Activated CD8-positive, alpha-beta T cell treated with anti-CD3 and anti-CD28 coated beads, Interleukin-2, amount 10 ng/mL, durations not matched to agents 7 days and 5 days (primary cell): ENCODE measurements at regions of chr15 and their contacts with region 1.

Region 1: DNA sequence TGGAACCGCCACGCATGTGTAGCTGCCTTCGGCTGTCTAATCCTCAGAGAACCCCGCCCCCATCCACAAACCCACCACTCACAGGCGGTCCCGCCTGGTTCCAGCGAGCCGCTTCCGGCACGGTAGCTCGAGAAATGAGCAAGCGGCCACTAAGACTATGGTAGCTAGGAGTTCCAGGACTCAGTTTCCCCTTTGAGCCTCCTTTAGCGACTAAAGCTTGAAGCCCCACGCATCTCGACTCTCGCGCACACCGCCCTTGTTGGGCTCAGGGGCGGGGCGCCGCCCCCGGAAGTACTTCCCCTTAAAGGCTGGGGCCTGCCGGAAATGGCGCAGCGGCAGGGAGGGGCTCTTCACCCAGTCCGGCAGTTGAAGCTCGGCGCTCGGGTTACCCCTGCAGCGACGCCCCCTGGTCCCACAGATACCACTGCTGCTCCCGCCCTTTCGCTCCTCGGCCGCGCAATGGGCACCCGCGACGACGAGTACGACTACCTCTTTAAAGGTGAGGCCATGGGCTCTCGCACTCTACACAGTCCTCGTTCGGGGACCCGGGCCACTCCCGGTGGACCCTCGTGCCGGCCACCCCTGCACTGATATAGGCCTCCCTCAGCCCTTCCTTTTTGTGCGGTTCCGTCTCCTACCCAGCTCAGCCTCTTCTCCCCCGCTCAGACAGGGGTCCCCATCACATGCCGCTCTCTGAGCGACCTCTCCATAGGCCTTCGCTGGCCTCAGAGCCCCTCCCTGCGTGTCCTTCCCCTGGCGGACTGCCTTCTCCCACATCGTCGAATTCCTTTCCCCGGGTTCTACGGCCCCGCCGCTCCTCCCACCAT is at the start of gene RAB11A:
- DNase-seq: peak; percentile 98
- ATAC-seq: peak; percentile 94
- H3K4me3 Mint-ChIP-seq: peak within 1 kb of the TSS; percentile 99
- H3K27ac Mint-ChIP-seq: peak within 1 kb of the TSS; percentile 94
- H3K4me1 Mint-ChIP-seq: peaks cover 28% of the 10 kb centered on the region
- H3K27me3 Mint-ChIP-seq: peaks cover 4% of the 10 kb centered on the region
- total RNA-seq, gene RAB11A: 163 to 168 TPM

Region 2: DNA sequence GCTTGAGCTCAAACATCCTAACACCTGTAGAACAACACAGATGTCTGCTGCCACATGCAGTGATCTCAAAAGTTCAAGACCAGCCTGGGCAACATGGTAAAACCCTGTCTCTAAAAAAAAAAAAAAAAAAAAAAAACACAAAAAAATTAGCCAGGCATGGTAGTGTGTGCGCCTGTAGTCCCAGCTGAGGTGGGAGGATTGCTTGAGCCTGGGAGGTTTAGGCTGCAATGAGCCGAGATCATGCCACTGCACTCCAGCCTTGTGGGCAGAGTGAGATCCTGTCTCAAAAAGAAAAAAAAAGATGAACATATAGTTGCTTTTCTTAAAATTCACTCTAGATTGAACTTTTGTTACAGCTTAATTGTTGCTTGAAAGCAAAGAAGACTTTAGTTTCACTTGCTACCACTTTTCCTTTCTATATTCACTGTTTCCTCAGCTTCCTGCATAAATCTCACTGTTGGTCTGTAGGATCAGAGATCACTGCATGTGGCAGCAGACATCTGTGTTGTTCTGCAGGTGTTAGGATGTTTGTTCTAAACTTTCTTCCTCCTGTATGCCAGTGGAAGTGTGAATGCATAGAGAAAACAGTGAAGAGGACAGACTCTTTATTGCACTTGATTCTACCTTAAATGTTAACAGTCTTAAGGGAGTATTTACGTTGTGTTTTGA is 12.6 kb after region 1 on chr15:
- CTCF ChIA-PET with region 1: interaction called, 9 read pairs
- POLR2A ChIA-PET with region 1: interaction called, 17 read pairs
- DNase-seq: no peak
- ATAC-seq: peak; percentile 66
- H3K4me3 Mint-ChIP-seq: peak overlapping the region; percentile 15
- H3K27ac Mint-ChIP-seq: peak overlapping the region; percentile 73
- H3K4me1 Mint-ChIP-seq: peaks cover 57% of the 10 kb centered on the region
- H3K27me3 Mint-ChIP-seq: no peaks in the 10 kb centered on the region

Region 3: GRCh38 chr15:65887565-65887964 is 18.2 kb after region 1 on chr15:
- CTCF ChIA-PET with region 1: interaction called, 9 read pairs
- POLR2A ChIA-PET with region 1: interaction called, 17 read pairs
- DNase-seq: peak; percentile 81
- ATAC-seq: peak; percentile 93
- H3K4me3 Mint-ChIP-seq: peak overlapping the region; percentile 19
- H3K27ac Mint-ChIP-seq: peak overlapping the region; percentile 71
- H3K4me1 Mint-ChIP-seq: peaks cover 73% of the 10 kb centered on the region
- H3K27me3 Mint-ChIP-seq: no peaks in the 10 kb centered on the region

Region 4: DNA sequence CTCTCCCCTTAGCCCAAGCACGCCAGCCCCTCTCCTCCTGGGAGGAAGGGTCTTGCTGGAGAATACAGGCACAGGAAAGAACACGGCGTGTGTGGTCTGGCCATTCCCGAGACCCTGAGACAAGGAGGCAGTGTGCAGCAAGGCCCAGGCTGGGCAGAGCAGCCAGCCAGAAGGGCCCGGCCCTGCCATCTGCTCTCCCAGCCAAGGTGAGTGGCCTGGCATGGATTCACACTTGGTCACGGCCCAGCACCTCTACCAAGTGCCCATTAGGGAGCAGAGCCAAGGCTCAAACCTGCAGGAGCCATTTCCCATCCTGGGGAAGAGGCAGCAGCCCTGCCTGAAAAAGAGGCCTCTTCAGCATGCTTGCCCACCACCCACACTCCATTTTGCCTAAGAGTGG is 355.6 kb after region 1 on chr15:
- CTCF ChIA-PET with region 1: no interaction called
- POLR2A ChIA-PET with region 1: no interaction called
- DNase-seq: no peak
- ATAC-seq: no peak
- H3K4me3 Mint-ChIP-seq: no peak overlapping the region
- H3K27ac Mint-ChIP-seq: no peak overlapping the region
- H3K4me1 Mint-ChIP-seq: no peaks in the 10 kb centered on the region
- H3K27me3 Mint-ChIP-seq: peaks cover 9% of the 10 kb centered on the region